ENCODE measurements at regions of chrX and their contacts with region 1.

Region 1: DNA sequence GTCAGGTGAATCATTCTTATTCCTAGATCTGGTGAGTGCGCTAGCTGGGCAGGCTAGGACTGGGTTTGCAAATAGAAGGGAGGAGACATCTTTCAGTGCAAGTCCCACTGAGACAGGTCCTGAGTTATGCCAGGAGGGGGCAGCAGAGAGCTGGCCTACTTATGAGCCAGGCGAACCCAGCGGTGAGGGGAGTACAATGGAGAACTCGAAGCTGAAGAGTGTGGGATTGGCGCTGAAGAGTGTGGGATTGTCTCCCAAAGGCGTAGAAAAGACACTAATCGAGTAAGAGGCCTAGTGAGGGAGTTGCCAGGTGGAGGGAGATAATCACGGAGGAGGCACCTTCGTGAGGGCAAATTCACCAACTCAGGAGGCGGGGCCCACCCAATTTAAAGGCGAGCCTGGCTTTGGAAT is 91.7 kb upstream of the CXorf66 start:
- DNase-seq: peak; percentile 45 to 88 (median 75)
- H3K4me3 ChIP-seq: no peak overlapping the region
- H3K27ac ChIP-seq: no peak overlapping the region
- H3K27me3 ChIP-seq: peaks cover 0 to 40% (median 5%) of the 10 kb centered on the region in 45 donors
- CTCF ChIP-seq: peak; percentile 46 to 93 (median 86)

Region 2: GRCh38 chrX:139811942-139812629 is 244.9 kb before region 1 on chrX:
- intact Hi-C with region 1: no loop called
- DNase-seq: no peak
- H3K4me3 ChIP-seq: no peak overlapping the region
- H3K27ac ChIP-seq: no peak overlapping the region
- H3K27me3 ChIP-seq: peaks cover 0 to 54% (median 8%) of the 10 kb centered on the region in 45 donors
- CTCF ChIP-seq: no peak

Region 3: GRCh38 chrX:140141444-140142029 is 84.5 kb after region 1 on chrX:
- intact Hi-C with region 1: loop called (anchors 5 kb)
- DNase-seq: peak in 3 of 10 donors; percentile 11 to 45 (median 27)
- H3K4me3 ChIP-seq: no peak overlapping the region
- H3K27ac ChIP-seq: no peak overlapping the region
- H3K27me3 ChIP-seq: peaks cover 0 to 66% (median 19%) of the 10 kb centered on the region in 45 donors
- CTCF ChIP-seq: peak; percentile 34 to 84 (median 72)

Region 4: DNA sequence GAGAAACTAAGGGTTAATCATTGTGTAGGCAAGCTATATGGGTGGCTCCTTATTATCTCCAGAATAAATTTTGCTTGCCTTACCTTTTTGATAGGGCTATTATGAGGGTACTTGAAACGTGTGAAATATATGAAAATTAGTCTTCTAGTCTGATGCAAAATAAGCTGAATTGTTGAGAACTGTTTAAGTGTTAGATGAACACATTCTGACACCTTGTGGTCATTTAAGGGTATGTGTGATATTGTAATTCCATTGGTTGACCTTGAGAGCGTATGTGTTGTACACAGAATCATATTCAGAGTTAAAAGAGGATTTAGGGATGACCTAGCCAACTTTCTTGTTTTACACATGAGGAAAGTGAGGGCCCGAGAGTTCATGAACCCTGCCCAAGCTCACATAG is 607.9 kb after region 1 on chrX:
- intact Hi-C with region 1: loop called (anchors 5 kb)
- DNase-seq: no peak
- H3K4me3 ChIP-seq: no peak overlapping the region
- H3K27ac ChIP-seq: no peak overlapping the region
- H3K27me3 ChIP-seq: peaks cover 0 to 43% (median 7%) of the 10 kb centered on the region in 45 donors
- CTCF ChIP-seq: peak in 53 of 56 donors; percentile 22 to 78 (median 54)

Measured in dorsolateral prefrontal cortex (tissue), 120 donors.